Natural killer cell (primary cell): ENCODE measurements at regions of chr9 and their contacts with region 1.

Region 1: GRCh38 chr9:15422372-15423230 is at the start of gene SNAPC3:
- DNase-seq: peak; percentile 86 to 95
- ATAC-seq: peak; percentile 97 to 100 (median 98)
- H3K4me3 ChIP-seq: peak within 1 kb of the TSS; percentile 89
- H3K4me3 Mint-ChIP-seq: peak within 1 kb of the TSS; percentile 90
- H3K27ac ChIP-seq: peak within 1 kb of the TSS; percentile 69
- H3K27ac Mint-ChIP-seq: peak within 1 kb of the TSS; percentile 86 to 88
- H3K4me1 ChIP-seq: peaks cover 24% of the 10 kb centered on the region
- H3K4me1 Mint-ChIP-seq: peaks cover 32 to 41% of the 10 kb centered on the region in 2 donors
- H3K27me3 ChIP-seq: no peaks in the 10 kb centered on the region
- H3K27me3 Mint-ChIP-seq: no peaks in the 10 kb centered on the region
- CTCF ChIP-seq: no peak
- total RNA-seq, gene SNAPC3: 18.5 to 22.2 (median 19.2) TPM

Region 2: DNA sequence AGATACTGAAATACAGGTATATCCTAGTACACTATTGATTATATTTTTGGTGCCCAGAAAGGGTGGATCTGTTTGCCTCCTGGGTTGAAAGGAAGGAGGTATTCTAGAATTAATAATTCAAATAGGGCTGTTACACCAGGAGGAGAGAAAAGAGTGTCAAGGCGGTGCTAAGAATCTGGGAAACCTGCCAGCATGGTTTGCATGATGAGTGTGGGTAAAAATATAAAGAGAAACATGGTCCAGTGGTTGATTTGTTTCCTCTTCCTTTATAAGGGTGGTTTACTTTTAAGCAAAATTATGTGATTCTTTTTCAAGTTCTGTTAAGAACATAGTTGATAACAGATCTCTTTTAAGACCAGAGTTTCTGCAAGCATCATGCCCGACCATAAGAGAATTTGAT is 1039.3 kb before region 1 on chr9:
- intact Hi-C with region 1: no loop called
- DNase-seq: no peak
- ATAC-seq: no peak
- H3K4me3 ChIP-seq: no peak overlapping the region
- H3K4me3 Mint-ChIP-seq: no peak overlapping the region
- H3K27ac ChIP-seq: no peak overlapping the region
- H3K27ac Mint-ChIP-seq: no peak overlapping the region
- H3K4me1 ChIP-seq: no peaks in the 10 kb centered on the region
- H3K4me1 Mint-ChIP-seq: no peaks in the 10 kb centered on the region
- H3K27me3 ChIP-seq: no peaks in the 10 kb centered on the region
- H3K27me3 Mint-ChIP-seq: no peaks in the 10 kb centered on the region
- CTCF ChIP-seq: no peak

Region 3: DNA sequence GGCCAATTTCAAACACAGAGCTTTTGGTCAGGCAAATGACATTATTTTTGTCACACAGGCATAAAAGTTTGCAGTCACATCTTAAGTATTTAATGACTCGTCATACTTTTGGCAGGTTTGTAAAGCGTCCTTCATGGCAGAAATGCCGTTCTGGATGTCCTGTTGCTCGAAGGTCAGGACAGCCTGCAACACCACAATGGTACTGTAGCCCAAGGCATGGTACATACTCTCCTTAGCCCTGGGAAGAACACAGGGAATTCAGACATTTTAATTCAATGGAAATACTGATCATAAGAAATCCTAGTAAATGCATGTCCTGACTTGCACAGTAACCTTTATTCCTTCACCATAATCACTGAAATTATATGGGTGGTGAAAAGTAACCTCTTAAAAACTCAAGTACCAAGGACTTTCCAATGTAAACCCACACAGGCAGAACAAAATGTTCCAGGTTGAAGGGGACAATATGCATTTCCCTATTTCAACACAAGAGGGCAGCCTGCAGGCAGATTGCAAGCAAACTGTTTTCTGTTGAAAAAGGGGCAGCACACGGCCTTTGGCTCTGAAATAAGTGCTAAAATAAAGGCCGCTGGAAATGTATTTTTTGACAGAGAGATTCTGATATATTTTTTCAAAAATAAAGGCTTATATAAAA is 211.3 kb before region 1 on chr9:
- intact Hi-C with region 1: loop called (anchors 1 kb)
- DNase-seq: peak; percentile 23 to 80
- ATAC-seq: peak in 2 of 3 donors; percentile 64 to 68
- H3K4me3 ChIP-seq: no peak overlapping the region
- H3K4me3 Mint-ChIP-seq: no peak overlapping the region
- H3K27ac ChIP-seq: no peak overlapping the region
- H3K27ac Mint-ChIP-seq: no peak overlapping the region
- H3K4me1 ChIP-seq: no peaks in the 10 kb centered on the region
- H3K4me1 Mint-ChIP-seq: peaks cover 9 to 22% of the 10 kb centered on the region in 2 donors
- H3K27me3 ChIP-seq: no peaks in the 10 kb centered on the region
- H3K27me3 Mint-ChIP-seq: no peaks in the 10 kb centered on the region
- CTCF ChIP-seq: peak; percentile 91

Region 4: GRCh38 chr9:15295761-15296405 is 126.7 kb before region 1 on chr9:
- intact Hi-C with region 1: loop called (anchors 1 kb)
- DNase-seq: peak; percentile 28 to 77
- ATAC-seq: peak; percentile 53 to 77 (median 61)
- H3K4me3 ChIP-seq: peak overlapping the region; percentile 24
- H3K4me3 Mint-ChIP-seq: peak overlapping the region; percentile 85
- H3K27ac ChIP-seq: peak overlapping the region; percentile 94
- H3K27ac Mint-ChIP-seq: peak overlapping the region; percentile 98 to 100
- H3K4me1 ChIP-seq: peaks cover 77% of the 10 kb centered on the region
- H3K4me1 Mint-ChIP-seq: peaks cover 79 to 86% of the 10 kb centered on the region in 2 donors
- H3K27me3 ChIP-seq: no peaks in the 10 kb centered on the region
- H3K27me3 Mint-ChIP-seq: no peaks in the 10 kb centered on the region
- CTCF ChIP-seq: no peak